Dendritic cell treated with granulocyte-macrophage colony-stimulating factor and Interleukin-4, amounts not matched to agents 40 ng/mL and 50 ng/mL, for 4 days (primary cell): ENCODE measurements at regions of chr14 and their contacts with region 1.

Region 1: DNA sequence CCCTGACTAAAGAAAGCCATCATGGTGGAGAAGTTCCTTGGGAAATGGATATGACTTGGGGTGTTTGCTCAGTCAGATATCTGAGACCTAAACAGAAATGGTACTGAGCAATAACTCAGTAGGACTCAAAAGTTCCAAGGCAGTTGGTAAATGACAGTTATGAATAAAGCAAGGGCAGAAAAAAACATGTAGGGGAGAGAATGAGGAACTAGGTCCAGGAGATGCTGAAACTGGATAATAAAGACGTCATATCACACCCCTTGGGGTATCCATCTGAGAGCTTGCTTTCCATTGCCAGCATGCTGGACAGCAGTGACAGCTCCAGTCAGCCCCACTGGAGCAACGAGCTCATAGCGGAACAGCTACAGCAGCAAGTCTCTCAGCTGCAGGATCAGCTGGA is 37.5 kb downstream of the RPGRIP1 start:
- H3K4me3 Mint-ChIP-seq: no peak overlapping the region
- H3K27ac Mint-ChIP-seq: peak overlapping the region; percentile 65
- H3K4me1 Mint-ChIP-seq: peaks cover 60% of the 10 kb centered on the region
- H3K27me3 Mint-ChIP-seq: peaks cover under 1% of the 10 kb centered on the region

Region 2: DNA sequence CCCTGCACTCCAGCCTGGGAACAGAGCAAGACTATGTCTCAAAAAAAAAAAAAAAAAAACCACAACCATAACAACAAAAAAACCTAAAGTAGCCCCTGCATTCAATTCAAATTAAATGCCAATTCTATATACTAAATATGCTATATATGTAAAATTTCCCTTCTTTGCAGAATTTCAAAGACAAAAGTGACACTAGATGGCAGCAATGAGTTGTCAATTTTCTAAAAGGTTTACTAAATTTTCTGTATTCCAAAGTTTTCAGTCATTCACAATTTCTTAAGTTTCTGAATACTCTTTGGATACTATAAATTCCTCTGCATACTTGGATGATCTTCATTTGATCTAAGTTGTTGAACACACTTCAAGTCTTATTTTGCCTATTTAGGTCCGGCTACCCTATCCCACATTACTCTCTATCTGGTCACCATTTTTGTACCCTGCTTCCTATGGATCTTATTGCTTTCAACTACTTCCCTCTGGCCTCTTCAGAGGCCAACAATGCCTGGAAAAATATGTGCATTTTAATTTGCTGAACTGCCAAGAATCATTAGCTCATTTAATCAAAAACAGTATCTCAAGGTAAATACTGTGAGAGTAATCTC is 76.1 kb before region 1 on chr14:
- intact Hi-C with region 1: no loop called
- H3K4me3 Mint-ChIP-seq: no peak overlapping the region
- H3K27ac Mint-ChIP-seq: no peak overlapping the region
- H3K4me1 Mint-ChIP-seq: peaks cover 48% of the 10 kb centered on the region
- H3K27me3 Mint-ChIP-seq: no peaks in the 10 kb centered on the region

Region 3: GRCh38 chr14:21257394-21257909 is 59.9 kb before region 1 on chr14:
- intact Hi-C with region 1: loop called (anchors 5 kb)
- H3K4me3 Mint-ChIP-seq: peak overlapping the region; percentile 57
- H3K27ac Mint-ChIP-seq: peak overlapping the region; percentile 81
- H3K4me1 Mint-ChIP-seq: peaks cover 53% of the 10 kb centered on the region
- H3K27me3 Mint-ChIP-seq: no peaks in the 10 kb centered on the region